Activated B cell treated with CpG ODN at 0.5 μM for 24 hours (primary cell): ENCODE measurements at regions of chr12 and their contacts with region 1.

Region 1: DNA sequence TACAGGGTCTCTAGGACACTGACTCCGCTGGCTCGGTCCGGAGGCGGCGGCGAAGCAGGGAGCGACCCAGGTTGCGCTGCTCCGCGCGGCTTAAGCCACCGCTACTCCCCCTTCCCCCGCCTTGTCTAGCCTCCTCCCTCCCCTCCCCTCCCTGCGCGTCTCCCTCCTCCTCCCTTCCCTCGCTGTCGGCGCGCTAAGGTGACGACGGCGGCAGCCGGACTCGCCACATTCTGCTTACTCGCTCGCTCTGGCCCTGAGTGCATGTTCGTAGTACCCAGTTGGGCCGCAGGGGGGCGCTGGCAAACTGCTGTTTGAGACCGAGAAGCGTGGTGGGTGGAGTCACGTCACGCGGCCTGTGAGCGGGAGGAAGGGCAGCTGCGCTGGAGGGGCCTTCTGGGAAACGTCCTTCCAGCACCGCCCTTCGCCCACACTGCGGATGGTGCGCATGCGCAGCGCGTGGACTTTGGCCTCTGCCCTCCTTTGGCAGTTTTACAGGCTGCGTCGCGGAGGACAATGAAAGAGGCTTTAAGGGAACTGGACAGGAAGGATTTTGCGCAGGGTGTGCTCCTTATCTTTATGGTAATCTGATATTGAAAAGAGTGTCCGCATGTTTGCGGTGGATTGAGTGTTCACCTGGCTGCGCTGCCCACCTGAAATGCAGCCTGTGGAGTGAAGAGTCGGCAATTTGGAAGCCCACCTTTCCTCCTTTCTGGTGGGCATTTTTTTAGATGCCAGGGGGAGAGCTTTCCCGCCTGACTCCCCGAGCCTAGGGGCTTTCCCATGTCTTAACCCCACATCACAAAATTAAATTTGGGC is at the start of gene SCAF11:
- DNase-seq: peak; percentile 100
- ATAC-seq: peak; percentile 83
- H3K4me3 Mint-ChIP-seq: peak within 1 kb of the TSS; percentile 96
- H3K27ac Mint-ChIP-seq: peak within 1 kb of the TSS; percentile 98
- H3K4me1 Mint-ChIP-seq: peaks cover 47% of the 10 kb centered on the region
- H3K27me3 Mint-ChIP-seq: no peaks in the 10 kb centered on the region
- CTCF ChIP-seq: no peak
- total RNA-seq, gene SCAF11: 180 and 198 TPM in 2 replicates

Region 2: DNA sequence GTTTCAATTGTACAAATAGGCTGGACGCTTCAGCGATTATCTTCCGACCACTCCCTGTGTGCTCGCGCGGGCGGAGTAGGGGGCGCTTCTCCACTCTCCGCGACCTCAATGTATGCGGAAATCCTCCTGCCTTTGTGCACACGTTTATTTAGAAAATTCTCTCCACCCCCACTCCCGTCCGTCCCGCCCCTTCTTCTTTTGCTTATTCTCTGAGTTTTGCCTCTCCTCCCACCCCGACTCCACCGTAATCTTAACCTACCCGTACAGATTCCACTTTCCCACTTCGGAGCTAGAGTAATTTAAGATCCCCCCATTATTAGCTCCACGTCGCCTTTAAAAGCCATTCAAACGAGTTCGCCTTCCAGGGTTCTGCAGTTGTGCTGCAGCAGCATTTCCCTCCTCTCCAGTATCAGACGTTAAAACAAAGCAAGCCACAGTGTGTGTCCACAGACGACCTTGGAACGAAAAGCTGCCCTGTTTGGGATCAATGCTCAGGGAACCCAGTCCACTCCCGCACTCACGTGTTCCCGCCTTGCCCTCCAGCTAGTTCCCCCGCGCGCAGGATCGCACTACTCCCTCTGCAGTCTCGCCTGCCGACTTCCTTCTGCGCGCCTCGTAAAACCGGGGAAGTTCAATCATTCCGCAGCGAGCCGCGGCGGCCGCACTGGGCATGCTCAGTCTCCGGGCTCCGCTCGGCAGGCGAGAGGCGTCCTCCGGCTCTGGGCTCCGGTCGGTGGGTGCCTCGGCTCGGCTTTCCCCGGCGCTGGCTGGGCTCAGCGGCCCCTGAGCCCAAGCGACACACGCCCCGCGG is 775.1 kb before region 1 on chr12 and contains the start of gene ANO6:
- CTCF ChIA-PET with region 1: no interaction called
- POLR2A ChIA-PET with region 1: interaction called, 3 read pairs
- intact Hi-C with region 1: loop called (anchors 1 kb)
- DNase-seq: peak; percentile 74
- ATAC-seq: peak; percentile 74
- H3K4me3 Mint-ChIP-seq: peak within 1 kb of the TSS; percentile 95
- H3K27ac Mint-ChIP-seq: peak within 1 kb of the TSS; percentile 90
- H3K4me1 Mint-ChIP-seq: peaks cover 45% of the 10 kb centered on the region
- H3K27me3 Mint-ChIP-seq: no peaks in the 10 kb centered on the region
- CTCF ChIP-seq: no peak
- total RNA-seq, gene ANO6: 14.8 and 16.3 TPM in 2 replicates

Region 3: GRCh38 chr12:46108721-46109120 is 118.0 kb after region 1 on chr12:
- CTCF ChIA-PET with region 1: no interaction called
- POLR2A ChIA-PET with region 1: interaction called, 8 read pairs
- intact Hi-C with region 1: loop called (anchors 1 kb)
- DNase-seq: no peak
- ATAC-seq: peak; percentile 87
- H3K4me3 Mint-ChIP-seq: peak overlapping the region; percentile 60
- H3K27ac Mint-ChIP-seq: peak overlapping the region; percentile 85
- H3K4me1 Mint-ChIP-seq: peaks cover 49% of the 10 kb centered on the region
- H3K27me3 Mint-ChIP-seq: no peaks in the 10 kb centered on the region
- CTCF ChIP-seq: no peak

Region 4: DNA sequence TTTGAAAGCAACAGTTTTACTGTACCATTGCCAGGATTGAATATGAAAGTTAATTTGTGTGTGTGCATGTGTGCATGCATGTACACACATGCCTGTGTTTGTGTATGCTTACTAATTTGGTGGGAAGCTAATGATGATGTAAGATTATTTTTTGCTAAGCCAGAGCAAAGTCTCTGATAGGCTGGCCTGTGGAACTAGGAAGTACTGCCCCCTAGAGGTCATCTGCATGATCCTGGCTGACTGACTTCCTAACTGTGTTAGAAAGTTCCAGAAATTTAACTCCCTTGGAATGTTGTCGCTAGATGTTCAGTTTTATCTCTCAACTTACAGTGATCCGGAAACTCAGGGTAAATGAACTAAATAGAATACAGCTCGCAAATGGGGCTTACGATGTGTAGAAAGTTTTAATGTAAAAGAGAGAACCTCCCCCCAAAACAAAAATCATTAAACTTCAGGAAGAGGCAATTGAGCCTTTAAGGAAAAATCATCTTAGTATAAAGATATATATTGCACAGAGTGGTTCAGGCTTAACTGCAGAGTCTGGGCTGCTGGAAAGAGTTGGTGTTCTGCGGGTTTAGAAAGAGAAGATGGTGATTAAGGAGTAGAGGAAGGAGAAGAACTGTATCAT is 312.5 kb after region 1 on chr12:
- CTCF ChIA-PET with region 1: interaction called, 4 read pairs
- POLR2A ChIA-PET with region 1: no interaction called
- intact Hi-C with region 1: loop called (anchors 2 kb)
- DNase-seq: no peak
- ATAC-seq: peak; percentile 74
- H3K4me3 Mint-ChIP-seq: no peak overlapping the region
- H3K27ac Mint-ChIP-seq: peak overlapping the region; percentile 20
- H3K4me1 Mint-ChIP-seq: peaks cover 31% of the 10 kb centered on the region
- H3K27me3 Mint-ChIP-seq: no peaks in the 10 kb centered on the region
- CTCF ChIP-seq: peak; percentile 30

Region 5: DNA sequence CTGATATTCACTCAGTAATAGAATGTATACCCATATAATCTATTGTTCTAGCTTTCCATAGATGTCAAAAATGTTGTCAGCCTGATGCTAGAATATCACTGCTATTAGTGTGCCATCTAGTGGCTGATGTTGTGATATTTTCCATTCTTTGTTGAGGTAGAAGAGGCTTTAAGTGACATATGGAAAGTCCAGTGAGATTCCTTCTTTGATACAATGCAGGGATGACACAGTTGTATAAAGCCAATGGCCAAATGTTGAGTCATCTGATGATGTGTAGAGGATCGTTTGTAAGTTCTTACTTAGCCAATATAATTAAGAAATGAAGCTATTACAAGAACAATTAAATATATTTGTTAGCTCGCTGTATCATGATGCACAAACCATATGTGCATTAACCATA is 1030.6 kb after region 1 on chr12:
- CTCF ChIA-PET with region 1: interaction called, 3 read pairs
- POLR2A ChIA-PET with region 1: no interaction called
- intact Hi-C with region 1: loop called (anchors 2 kb)
- DNase-seq: no peak
- ATAC-seq: no peak
- H3K4me3 Mint-ChIP-seq: no peak overlapping the region
- H3K27ac Mint-ChIP-seq: no peak overlapping the region
- H3K4me1 Mint-ChIP-seq: no peaks in the 10 kb centered on the region
- H3K27me3 Mint-ChIP-seq: peaks cover 3% of the 10 kb centered on the region
- CTCF ChIP-seq: peak; percentile 52

Region 6: GRCh38 chr12:47356129-47356700 is 1365.5 kb after region 1 on chr12:
- CTCF ChIA-PET with region 1: no interaction called
- POLR2A ChIA-PET with region 1: no interaction called
- intact Hi-C with region 1: loop called (anchors 1 kb)
- DNase-seq: no peak
- ATAC-seq: peak; percentile 77
- H3K4me3 Mint-ChIP-seq: peak overlapping the region; percentile 51
- H3K27ac Mint-ChIP-seq: peak overlapping the region; percentile 97
- H3K4me1 Mint-ChIP-seq: peaks cover 85% of the 10 kb centered on the region
- H3K27me3 Mint-ChIP-seq: no peaks in the 10 kb centered on the region
- CTCF ChIP-seq: no peak